ENCODE measurements at regions of chr22 and their contacts with region 1.

Region 1: DNA sequence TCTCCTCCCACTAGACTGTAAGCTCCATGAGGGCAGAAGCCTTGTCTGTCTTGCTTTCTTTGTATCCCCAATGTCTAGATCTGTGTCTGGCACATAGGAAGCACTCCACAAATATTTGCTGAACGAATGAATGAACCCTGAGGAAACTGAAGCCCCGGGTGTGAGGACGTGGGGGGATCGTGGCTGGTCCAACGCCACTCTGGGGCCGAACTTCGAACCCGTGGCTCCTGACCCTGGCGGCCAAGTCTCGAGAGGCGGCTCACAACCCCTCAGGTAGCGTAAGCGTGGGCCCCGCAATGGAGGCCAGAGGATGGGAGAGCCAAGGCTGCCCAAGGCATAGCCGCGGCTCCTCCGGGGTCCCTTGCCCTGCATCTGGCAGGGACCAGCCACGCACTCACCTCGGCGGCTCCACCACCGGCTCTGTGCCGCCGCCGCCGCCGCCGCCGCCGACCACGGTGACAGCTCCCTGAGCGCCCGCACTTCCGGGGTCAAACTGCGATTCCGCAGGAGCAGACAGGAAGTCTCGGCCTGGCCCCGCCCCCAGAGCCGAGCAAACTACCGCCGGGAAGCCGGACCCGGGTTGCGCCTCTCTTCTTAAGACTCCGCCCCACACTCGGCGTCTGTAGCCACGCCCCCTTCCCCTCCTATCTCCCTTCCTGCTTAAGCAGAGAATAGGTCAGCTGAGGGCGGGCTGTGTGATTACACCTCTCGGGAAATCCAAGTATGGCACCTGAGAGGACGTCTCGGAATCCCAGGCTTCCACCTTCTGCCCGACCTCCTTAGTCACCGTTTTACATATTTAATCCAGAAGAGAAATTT is at the start of gene ASCC2:
- DNase-seq: peak; percentile 96 to 99 (median 98)
- H3K4me3 ChIP-seq: peak within 1 kb of the TSS; percentile 80 to 89
- H3K4me3 Mint-ChIP-seq: peak within 1 kb of the TSS; percentile 93 to 99 (median 97)
- H3K27ac ChIP-seq: peak within 1 kb of the TSS; percentile 72
- H3K27ac Mint-ChIP-seq: peak within 1 kb of the TSS; percentile 94 to 99 (median 98)
- H3K4me1 ChIP-seq: peaks cover 32% of the 10 kb centered on the region
- H3K4me1 Mint-ChIP-seq: peaks cover 29 to 48% (median 35%) of the 10 kb centered on the region in 4 donors
- H3K27me3 ChIP-seq: no peaks in the 10 kb centered on the region
- H3K27me3 Mint-ChIP-seq: no peaks in the 10 kb centered on the region
- total RNA-seq, gene ASCC2: 82.3 to 88.7 TPM

Region 2: DNA sequence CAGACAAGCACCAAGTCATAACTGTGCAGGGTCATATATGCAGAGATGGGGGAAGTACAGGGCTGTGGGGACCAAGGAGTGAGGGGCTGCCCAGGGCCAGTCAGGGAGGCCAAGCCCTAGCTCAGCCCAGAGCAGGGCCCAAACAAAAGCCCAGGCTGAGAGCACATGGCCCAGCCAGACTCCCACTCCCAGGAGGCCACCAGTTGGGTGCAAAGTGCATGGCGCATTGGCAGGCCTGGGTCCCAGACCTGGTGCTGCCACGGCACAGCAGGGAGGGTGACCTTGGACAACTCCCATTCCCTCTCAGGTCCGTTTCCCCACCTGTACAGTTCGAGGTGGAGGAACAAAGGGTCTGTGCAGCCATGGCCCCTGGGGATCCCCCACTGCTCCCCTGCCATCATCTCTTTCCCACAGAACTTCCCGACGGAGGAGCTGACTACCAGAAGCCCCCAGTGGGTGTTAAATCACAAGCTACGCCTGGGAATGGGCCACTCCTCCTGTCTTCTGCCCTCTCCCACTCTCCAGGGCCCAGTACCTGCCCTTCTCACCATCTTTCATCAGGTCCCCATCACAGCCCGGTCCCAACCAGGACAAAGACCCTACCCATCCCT is 257.7 kb before region 1 on chr22:
- CTCF ChIA-PET with region 1: no interaction called
- POLR2A ChIA-PET with region 1: no interaction called
- intact Hi-C with region 1: loop called (anchors 2 kb)
- DNase-seq: peak in 1 of 5 donors; percentile 5
- H3K4me3 ChIP-seq: peak overlapping the region in 1 of 2 donors; percentile 61
- H3K4me3 Mint-ChIP-seq: peak overlapping the region; percentile 90 to 97 (median 95)
- H3K27ac ChIP-seq: peak overlapping the region; percentile 58
- H3K27ac Mint-ChIP-seq: peak overlapping the region; percentile 85 to 95 (median 94)
- H3K4me1 ChIP-seq: peaks cover 14% of the 10 kb centered on the region
- H3K4me1 Mint-ChIP-seq: peaks cover 5 to 26% (median 14%) of the 10 kb centered on the region in 4 donors
- H3K27me3 ChIP-seq: no peaks in the 10 kb centered on the region
- H3K27me3 Mint-ChIP-seq: no peaks in the 10 kb centered on the region

Region 3: DNA sequence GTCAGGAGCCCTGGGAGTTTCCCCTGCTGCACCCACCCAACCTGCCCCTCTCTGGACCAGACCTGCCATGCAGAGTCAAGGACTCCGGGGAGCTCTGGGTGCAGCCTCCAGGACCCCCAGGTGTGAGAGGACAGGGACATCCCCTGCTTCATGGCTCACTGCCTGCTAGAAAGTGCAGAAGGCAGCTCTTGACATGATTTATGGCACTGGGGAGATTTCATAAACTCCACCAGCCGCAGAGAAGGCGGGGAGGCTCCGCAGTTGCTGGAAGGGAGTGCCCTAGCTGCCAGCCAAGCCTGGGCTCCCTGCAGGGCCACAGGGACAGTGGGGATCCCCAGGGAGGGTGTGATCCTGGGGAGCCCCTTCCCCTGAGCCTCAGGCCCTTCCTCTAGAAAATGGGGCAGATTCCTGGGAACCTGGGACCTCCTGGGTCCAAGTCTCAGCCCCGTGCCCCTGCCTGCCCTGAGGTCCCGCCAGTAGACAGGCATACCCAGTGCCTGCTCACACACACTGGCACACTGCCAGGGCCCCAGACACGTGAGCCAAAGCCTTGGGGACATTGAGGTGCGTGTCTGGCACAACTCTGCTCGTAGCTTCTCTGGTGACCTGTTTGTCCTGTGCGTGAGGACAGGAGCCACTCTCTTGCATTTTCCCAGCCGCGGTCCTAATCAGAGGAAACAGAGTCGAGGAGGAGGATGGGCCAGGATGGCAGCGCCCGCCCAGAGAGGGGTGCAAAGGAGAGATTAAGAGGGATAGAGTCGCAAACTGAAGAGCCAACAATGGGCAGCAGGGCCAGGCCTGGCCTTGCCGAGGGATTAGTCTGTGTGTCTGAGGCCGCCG is 104.4 kb before region 1 on chr22:
- CTCF ChIA-PET with region 1: no interaction called
- POLR2A ChIA-PET with region 1: no interaction called
- intact Hi-C with region 1: no loop called
- DNase-seq: peak in 1 of 5 donors; percentile 19
- H3K4me3 ChIP-seq: no peak overlapping the region
- H3K4me3 Mint-ChIP-seq: no peak overlapping the region
- H3K27ac ChIP-seq: no peak overlapping the region
- H3K27ac Mint-ChIP-seq: no peak overlapping the region
- H3K4me1 ChIP-seq: no peaks in the 10 kb centered on the region
- H3K4me1 Mint-ChIP-seq: no peaks in the 10 kb centered on the region
- H3K27me3 ChIP-seq: no peaks in the 10 kb centered on the region
- H3K27me3 Mint-ChIP-seq: no peaks in the 10 kb centered on the region

Region 4: DNA sequence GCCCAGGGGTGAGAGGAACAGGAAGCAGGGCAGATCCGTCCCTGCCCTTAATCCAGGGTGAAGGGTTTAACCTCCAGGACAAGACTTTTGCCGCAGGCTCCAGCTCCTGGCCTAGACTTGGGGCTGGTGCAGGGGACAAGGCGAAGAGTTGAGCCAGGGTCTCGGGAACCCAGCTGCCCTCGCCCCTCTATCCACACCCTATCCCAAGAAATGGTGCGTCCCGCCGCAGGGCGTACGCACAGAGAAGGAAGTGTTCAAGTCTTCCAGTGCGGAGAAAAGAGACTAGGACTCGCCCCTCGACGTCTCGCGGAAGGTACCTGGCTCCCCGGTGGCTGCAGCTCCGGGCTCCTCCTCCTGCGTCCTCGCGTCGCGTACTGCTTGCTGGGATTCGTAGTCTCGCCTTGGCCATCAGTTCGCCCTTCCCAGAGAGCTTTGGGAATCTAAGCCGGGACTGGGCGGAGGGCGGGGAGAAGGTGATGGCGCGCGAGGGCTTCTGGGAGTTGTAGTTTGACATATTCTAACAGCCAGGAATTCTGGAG is 71.3 kb before region 1 on chr22 and contains the start of gene ZMAT5:
- CTCF ChIA-PET with region 1: interaction called, 5 read pairs
- POLR2A ChIA-PET with region 1: interaction called, 7 read pairs
- intact Hi-C with region 1: loop called (anchors 1 kb)
- DNase-seq: peak; percentile 93 to 96 (median 95)
- H3K4me3 ChIP-seq: peak within 1 kb of the TSS; percentile 96 to 100
- H3K4me3 Mint-ChIP-seq: peak within 1 kb of the TSS; percentile 95 to 100 (median 99)
- H3K27ac ChIP-seq: peak within 1 kb of the TSS; percentile 87
- H3K27ac Mint-ChIP-seq: peak within 1 kb of the TSS; percentile 38 to 99 (median 99)
- H3K4me1 ChIP-seq: peaks cover 29% of the 10 kb centered on the region
- H3K4me1 Mint-ChIP-seq: peaks cover 22 to 53% (median 28%) of the 10 kb centered on the region in 4 donors
- H3K27me3 ChIP-seq: no peaks in the 10 kb centered on the region
- H3K27me3 Mint-ChIP-seq: no peaks in the 10 kb centered on the region
- total RNA-seq, gene ZMAT5: 16.3 to 20.4 TPM